MCF 10A (cell line): ENCODE measurements at regions of chr14 and their contacts with region 1.

Region 1: DNA sequence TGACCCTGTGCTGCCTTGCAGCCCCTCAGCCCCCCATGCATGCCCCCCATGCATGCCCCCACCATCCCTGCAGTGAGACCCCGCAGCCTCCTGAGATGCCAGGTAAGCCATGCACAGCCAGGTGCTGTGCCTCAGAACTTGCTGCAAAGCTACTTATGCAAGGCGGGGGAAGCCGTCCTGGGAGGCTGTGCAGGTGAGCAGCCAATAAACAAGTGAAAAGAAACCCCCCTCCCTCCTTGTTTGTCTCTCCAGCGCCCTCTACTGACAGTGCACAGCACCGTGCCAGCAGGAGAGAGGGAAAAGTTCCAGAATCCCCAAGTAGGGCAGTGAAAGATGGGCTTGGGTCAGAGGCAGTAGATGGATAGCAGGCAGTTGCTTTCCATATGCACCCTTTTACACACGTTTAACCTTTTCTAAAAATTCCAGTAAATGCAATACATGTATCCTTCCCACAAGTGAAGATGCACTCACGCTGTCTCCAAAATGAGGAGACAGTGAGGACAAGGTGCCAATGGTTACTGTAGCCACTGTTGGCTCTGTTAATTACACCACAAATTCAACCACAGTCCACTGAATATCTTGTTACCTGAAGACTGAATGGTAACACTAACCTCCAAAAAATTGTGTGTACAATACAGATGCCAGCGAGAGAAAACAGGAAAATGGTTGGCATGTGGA is 18.0 kb downstream of the TNFAIP2 start:
- DNase-seq: peak; percentile 77
- H3K4me3 Mint-ChIP-seq: no peak overlapping the region
- H3K27ac Mint-ChIP-seq: no peak overlapping the region
- H3K4me1 Mint-ChIP-seq: peaks cover 32% of the 10 kb centered on the region
- H3K27me3 Mint-ChIP-seq: peaks cover 19% of the 10 kb centered on the region
- CTCF ChIP-seq: peak; percentile 68

Region 2: DNA sequence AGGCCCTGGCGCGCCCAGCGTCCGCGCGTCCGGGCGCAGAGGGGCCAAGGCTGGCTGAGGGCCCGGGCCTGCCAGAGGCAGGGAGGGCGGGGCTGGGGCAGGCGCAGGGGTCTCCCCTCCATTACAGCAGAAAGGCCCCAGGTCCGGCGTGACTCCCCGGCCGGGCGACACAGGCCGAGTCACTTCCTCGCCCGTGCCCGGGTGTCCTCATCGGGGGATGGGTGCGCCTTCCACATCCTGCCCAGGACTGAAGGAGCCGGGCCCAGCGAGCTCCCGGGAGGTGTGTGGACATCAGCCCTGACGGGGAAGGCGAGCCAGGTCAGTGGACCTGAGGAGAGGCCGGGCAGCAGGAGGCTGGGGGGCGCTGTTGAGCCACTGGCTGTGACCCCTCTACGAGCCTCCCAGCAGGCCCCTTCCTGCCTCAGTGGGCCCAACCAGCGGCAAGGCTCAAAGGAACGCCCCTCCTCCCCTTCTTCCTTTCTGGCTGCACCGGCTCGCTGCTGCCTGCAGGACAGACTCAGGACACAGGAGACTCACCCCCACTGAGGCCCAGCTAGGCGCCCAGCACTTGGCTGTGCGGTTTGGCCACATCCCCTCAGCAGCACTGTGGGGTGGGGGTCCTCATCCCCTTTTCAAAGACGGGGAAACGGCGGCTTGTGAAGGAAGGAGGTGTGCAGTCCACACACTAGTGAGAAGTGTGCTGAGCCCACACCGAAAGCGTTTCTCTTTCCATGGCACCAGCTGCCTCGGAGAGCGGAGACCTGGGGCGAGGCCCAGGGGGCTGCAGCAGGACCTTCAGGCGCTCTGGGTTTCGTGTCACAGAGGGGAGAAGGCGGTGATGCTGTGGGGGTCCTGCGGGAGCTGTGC is 17.4 kb before region 1 on chr14:
- CTCF ChIA-PET with region 1: interaction called, 5 read pairs
- POLR2A ChIA-PET with region 1: interaction called, 10 read pairs
- intact Hi-C with region 1: no loop called
- DNase-seq: no peak
- H3K4me3 Mint-ChIP-seq: peak overlapping the region; percentile 62
- H3K27ac Mint-ChIP-seq: no peak overlapping the region
- H3K4me1 Mint-ChIP-seq: peaks cover 29% of the 10 kb centered on the region
- H3K27me3 Mint-ChIP-seq: no peaks in the 10 kb centered on the region
- CTCF ChIP-seq: peak; percentile 25

Region 3: GRCh38 chr14:103185051-103185992 is 44.1 kb after region 1 on chr14:
- CTCF ChIA-PET with region 1: interaction called, 3 read pairs
- POLR2A ChIA-PET with region 1: no interaction called
- intact Hi-C with region 1: loop called (anchors 5 kb)
- DNase-seq: peak; percentile 67
- H3K4me3 Mint-ChIP-seq: no peak overlapping the region
- H3K27ac Mint-ChIP-seq: peak overlapping the region; percentile 78
- H3K4me1 Mint-ChIP-seq: peaks cover 5% of the 10 kb centered on the region
- H3K27me3 Mint-ChIP-seq: no peaks in the 10 kb centered on the region
- CTCF ChIP-seq: peak; percentile 59